ENCODE measurements at regions of chr2 and their contacts with region 1.

Region 1: DNA sequence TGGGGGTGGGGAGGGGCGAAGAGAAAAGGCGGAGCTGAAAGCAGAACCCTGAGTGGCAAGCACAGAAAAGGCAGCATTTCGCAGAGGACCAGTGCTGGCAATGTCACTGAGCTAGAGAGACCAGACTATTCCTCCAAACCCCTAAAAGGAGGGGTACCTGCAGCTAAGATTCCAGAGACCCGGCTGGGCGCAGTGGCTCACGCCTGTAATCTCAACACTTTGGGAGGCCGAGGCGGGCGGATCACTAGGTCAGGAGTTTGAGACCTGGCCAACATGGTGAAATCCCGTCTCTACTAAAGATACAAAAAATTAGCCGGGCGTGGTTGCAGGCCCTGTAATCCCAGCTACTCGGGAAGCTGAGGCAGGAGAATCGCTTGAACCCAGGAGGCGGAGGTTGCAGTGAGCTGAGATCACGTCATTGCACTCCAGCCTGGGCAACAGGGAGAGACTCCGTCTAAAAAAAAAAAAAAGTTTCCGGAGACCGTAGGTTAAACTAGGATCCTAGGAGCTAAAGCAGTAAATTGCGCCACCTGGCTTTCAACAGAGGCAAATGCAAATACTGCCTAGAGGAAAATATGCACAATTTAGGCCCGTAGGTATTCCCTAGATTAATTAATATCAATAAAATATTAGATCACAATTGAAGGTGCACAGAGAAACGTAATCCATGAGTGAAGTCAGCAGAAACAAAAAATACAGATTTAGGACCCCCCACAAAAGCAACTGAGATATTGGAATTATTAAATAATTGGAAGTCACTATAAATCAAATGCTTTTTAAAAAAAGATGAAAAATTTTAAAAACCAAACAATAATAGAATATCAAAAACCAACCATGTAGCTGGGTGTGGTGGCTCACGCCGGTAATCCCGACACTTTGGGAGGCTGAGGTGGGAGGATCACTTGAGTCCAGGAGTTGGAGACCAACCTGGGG is 4.9 kb downstream of the UCN start:
- DNase-seq: peak; percentile 69
- H3K4me3 ChIP-seq: no peak overlapping the region
- H3K27ac ChIP-seq: no peak overlapping the region
- H3K4me1 ChIP-seq: peaks cover 8% of the 10 kb centered on the region
- H3K27me3 ChIP-seq: peaks cover 23 to 36% of the 10 kb centered on the region in 2 experiments
- CTCF ChIP-seq: peak; percentile 66
- POLR2A ChIP-seq: no peak

Region 2: GRCh38 chr2:26941486-26941885 is 361.9 kb before region 1 on chr2:
- CTCF ChIA-PET with region 1: no interaction called
- POLR2A ChIA-PET with region 1: no interaction called
- dilution Hi-C with region 1: no loop called
- intact Hi-C with region 1: no loop called
- DNase-seq: no peak
- H3K4me3 ChIP-seq: no peak overlapping the region
- H3K27ac ChIP-seq: no peak overlapping the region
- H3K4me1 ChIP-seq: no peaks in the 10 kb centered on the region
- H3K27me3 ChIP-seq: peaks cover 3 to 4% of the 10 kb centered on the region in 2 experiments
- CTCF ChIP-seq: no peak
- POLR2A ChIP-seq: no peak

Region 3: GRCh38 chr2:27095745-27096651 is 207.4 kb before region 1 on chr2:
- CTCF ChIA-PET with region 1: interaction called, 49 read pairs
- POLR2A ChIA-PET with region 1: no interaction called
- dilution Hi-C with region 1: no loop called
- intact Hi-C with region 1: loop called (anchors 1 kb)
- DNase-seq: peak; percentile 71
- H3K4me3 ChIP-seq: peak overlapping the region in 1 of 3 experiments; percentile 8
- H3K27ac ChIP-seq: no peak overlapping the region
- H3K4me1 ChIP-seq: no peaks in the 10 kb centered on the region
- H3K27me3 ChIP-seq: no peaks in the 10 kb centered on the region
- CTCF ChIP-seq: no peak
- POLR2A ChIP-seq: peak; percentile 63

Region 4: GRCh38 chr2:27174316-27175040 is 128.9 kb before region 1 on chr2:
- CTCF ChIA-PET with region 1: interaction called, 13 read pairs
- POLR2A ChIA-PET with region 1: interaction called, 3 read pairs
- dilution Hi-C with region 1: no loop called
- intact Hi-C with region 1: no loop called
- DNase-seq: no peak
- H3K4me3 ChIP-seq: no peak overlapping the region
- H3K27ac ChIP-seq: no peak overlapping the region
- H3K4me1 ChIP-seq: no peaks in the 10 kb centered on the region
- H3K27me3 ChIP-seq: peaks cover 30 to 34% of the 10 kb centered on the region in 2 experiments
- CTCF ChIP-seq: no peak
- POLR2A ChIP-seq: no peak

Region 5: DNA sequence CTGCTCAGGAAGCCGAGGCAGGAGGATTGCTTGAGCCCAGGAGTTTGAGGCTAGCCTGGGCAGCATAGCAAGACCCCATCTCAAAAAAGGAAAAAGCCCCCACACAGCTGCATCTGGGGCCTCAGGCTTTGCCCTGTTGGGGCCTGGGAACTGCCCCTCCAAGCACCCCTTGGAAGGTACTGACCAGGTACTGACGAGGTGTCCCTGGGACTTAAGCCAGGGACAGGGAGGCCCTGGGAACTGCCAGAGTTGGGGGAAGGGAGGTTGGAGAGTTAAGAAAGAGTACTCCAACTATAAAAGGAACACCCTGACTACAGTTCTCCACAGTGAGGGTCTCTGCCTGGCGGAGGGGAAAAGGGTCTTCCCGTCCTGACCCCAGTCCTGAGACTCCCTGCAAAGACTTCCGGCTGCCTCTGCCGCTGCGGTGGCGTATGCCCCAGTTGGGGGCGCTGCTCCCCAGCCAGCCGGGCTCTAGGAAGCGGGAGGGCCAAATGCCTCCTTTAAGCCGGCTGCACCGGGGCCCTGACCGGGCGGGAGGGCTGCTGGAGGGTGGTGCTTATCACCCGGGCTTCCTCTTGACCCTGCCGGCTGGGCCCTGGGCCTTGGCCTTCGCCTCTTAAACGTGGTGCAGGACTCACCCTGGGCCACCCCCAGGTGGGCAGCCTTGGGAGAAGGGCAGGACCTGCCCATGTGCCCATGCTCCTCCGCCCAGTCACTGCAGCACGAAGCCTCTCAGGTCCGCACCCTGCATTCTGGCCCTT is 53.3 kb before region 1 on chr2:
- CTCF ChIA-PET with region 1: interaction called, 33 read pairs
- POLR2A ChIA-PET with region 1: no interaction called
- dilution Hi-C with region 1: no loop called
- intact Hi-C with region 1: loop called (anchors 1 kb)
- DNase-seq: peak; percentile 64
- H3K4me3 ChIP-seq: no peak overlapping the region
- H3K27ac ChIP-seq: no peak overlapping the region
- H3K4me1 ChIP-seq: peaks cover 15% of the 10 kb centered on the region
- H3K27me3 ChIP-seq: no peaks in the 10 kb centered on the region
- CTCF ChIP-seq: peak; percentile 83 to 89
- POLR2A ChIP-seq: no peak

Region 6: DNA sequence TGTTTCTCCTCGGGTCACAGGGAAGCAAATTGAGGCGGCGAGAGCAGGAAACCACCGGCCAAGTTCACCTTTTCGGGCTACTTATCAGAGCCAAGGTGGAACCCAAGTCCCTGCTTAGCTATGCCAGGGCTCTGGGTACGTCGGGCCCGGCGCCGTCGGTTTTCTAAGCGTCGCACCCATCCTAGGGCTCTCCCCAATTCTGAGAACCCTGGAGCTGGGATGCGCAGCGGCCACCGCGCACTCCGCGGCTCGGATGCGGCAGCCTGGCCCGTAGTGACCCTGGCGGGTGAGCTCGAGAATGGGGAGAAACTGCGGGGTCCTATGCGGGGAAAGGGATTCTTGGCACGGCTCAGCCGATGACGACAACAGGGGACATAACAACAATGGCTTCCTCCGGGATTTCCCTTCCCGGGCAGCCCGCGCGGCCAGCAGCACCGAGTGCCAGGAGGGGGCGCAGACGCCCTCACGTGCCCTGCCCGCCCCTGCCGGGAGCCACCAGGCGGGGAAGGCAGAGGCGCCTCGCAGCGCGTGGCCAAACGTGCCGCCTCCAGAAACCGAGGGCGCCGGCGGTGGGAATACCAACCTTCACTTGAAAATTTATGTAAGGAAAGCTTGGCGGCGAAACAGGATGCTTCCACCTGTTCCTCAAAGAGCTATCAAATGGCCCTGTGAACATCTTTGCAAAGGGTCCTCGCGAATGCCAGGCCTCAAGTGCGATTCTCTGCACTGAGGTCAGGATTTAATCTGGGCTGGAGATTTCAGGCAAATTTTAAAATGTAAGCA is 38.4 kb before region 1 on chr2:
- CTCF ChIA-PET with region 1: interaction called, 61 read pairs
- POLR2A ChIA-PET with region 1: no interaction called
- dilution Hi-C with region 1: no loop called
- intact Hi-C with region 1: loop called (anchors 1 kb)
- DNase-seq: peak; percentile 87
- H3K4me3 ChIP-seq: peak overlapping the region in 2 of 3 experiments; percentile 32 to 82
- H3K27ac ChIP-seq: no peak overlapping the region
- H3K4me1 ChIP-seq: peaks cover 22% of the 10 kb centered on the region
- H3K27me3 ChIP-seq: peaks cover 19 to 42% of the 10 kb centered on the region in 2 experiments
- CTCF ChIP-seq: peak; percentile 90 to 93
- POLR2A ChIP-seq: no peak

Region 7: GRCh38 chr2:27291865-27292264 is 11.5 kb before region 1 on chr2:
- CTCF ChIA-PET with region 1: interaction called, 75 read pairs
- POLR2A ChIA-PET with region 1: interaction called, 6 read pairs
- dilution Hi-C with region 1: no loop called
- intact Hi-C with region 1: no loop called
- DNase-seq: no peak
- H3K4me3 ChIP-seq: no peak overlapping the region
- H3K27ac ChIP-seq: no peak overlapping the region
- H3K4me1 ChIP-seq: peaks cover 44% of the 10 kb centered on the region
- H3K27me3 ChIP-seq: no peaks in the 10 kb centered on the region
- CTCF ChIP-seq: peak in 1 of 2 donors; percentile 6
- POLR2A ChIP-seq: no peak

Region 8: DNA sequence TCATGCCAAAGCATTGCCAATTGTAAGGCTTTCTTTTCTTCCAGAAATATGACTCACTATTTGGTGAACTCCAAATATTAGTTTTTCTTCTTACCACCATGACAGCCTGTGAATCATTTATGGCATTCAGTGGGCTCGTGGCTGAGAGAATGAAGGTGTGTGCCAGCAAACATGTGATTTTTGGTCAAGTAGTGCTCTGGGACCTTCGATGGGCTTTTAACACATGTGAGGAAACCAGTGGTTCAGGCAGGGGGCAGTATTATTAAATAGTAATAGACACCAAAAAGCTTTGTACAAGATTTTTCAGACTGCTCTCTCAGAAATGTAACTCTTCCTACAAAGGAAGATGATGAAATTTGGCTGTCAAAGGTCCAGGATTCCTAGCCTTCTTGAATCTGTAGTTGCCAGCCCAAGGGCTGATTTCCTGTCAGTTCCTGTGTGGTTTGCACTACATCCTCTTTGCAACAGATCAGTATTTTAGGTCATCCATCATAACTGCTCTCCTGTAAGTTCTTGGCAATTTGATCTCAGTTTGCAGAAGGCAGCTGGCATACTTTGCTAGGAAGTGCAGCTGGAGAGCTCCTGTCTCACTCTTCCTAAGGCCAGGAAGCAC is 651.5 kb after region 1 on chr2:
- CTCF ChIA-PET with region 1: no interaction called
- POLR2A ChIA-PET with region 1: no interaction called
- dilution Hi-C with region 1: no loop called
- intact Hi-C with region 1: no loop called
- DNase-seq: peak; percentile 99
- H3K4me3 ChIP-seq: no peak overlapping the region
- H3K27ac ChIP-seq: peak overlapping the region; percentile 95
- H3K4me1 ChIP-seq: peaks cover 47% of the 10 kb centered on the region
- H3K27me3 ChIP-seq: no peaks in the 10 kb centered on the region
- CTCF ChIP-seq: peak; percentile 33 to 37
- POLR2A ChIP-seq: peak; percentile 94

Measured in endothelial cell of umbilical vein (primary cell).